ENCODE measurements at regions of chr7 and their contacts with region 1.

Region 1: GRCh38 chr7:44769776-44770662 is 21.4 kb downstream of the ZMIZ2 start:
- DNase-seq: no peak
- ATAC-seq: peak; percentile 10
- H3K4me3 Mint-ChIP-seq: peak overlapping the region; percentile 58
- H3K27ac Mint-ChIP-seq: peak overlapping the region; percentile 88
- H3K4me1 Mint-ChIP-seq: peaks cover 60% of the 10 kb centered on the region
- H3K27me3 Mint-ChIP-seq: no peaks in the 10 kb centered on the region
- CTCF ChIP-seq: no peak

Region 2: DNA sequence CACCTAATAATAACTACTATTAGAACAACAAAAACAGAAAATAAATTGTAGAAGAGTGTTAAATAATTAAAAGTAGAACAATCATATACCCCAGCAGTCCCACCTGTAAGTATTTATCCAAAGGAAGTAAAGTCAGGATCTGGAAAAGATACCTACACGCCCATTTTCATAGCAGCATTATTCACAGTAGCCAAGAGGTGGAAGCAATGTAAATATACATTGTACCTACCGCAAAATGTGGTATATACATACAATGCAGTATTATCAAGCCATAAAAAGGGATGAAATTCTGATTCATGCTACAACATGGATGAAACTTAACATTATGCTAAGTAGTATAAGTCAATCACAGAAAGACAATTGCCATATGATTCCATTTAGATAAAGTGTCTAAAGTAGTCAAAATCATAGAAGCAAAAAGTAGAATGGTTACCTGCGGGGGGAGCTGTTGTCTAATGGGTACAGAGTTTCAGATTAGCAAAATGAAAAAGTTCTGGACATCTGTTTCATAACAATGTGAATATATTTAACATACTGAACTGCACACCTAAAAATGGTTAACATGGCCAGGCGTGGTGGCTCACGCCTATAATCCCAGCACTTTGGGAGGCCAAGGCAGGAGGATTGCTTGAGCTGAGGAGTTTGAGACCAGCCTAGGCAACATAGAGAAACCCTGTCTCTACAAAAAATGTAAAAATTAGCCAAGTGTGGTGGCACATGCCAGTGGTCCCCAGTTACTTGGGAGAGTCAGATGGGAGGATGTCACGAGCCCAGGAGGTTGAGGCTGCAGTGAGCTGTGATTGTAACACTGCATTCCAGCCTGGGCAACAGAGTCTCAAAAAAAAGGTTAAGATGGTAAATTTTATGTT is 181.9 kb before region 1 on chr7:
- CTCF ChIA-PET with region 1: interaction called, 3 read pairs
- POLR2A ChIA-PET with region 1: interaction called, 9 read pairs
- intact Hi-C with region 1: loop called (anchors 1 kb)
- DNase-seq: no peak
- ATAC-seq: peak; percentile 79
- H3K4me3 Mint-ChIP-seq: no peak overlapping the region
- H3K27ac Mint-ChIP-seq: no peak overlapping the region
- H3K4me1 Mint-ChIP-seq: peaks cover 6% of the 10 kb centered on the region
- H3K27me3 Mint-ChIP-seq: peaks cover 3% of the 10 kb centered on the region
- CTCF ChIP-seq: no peak

Region 3: DNA sequence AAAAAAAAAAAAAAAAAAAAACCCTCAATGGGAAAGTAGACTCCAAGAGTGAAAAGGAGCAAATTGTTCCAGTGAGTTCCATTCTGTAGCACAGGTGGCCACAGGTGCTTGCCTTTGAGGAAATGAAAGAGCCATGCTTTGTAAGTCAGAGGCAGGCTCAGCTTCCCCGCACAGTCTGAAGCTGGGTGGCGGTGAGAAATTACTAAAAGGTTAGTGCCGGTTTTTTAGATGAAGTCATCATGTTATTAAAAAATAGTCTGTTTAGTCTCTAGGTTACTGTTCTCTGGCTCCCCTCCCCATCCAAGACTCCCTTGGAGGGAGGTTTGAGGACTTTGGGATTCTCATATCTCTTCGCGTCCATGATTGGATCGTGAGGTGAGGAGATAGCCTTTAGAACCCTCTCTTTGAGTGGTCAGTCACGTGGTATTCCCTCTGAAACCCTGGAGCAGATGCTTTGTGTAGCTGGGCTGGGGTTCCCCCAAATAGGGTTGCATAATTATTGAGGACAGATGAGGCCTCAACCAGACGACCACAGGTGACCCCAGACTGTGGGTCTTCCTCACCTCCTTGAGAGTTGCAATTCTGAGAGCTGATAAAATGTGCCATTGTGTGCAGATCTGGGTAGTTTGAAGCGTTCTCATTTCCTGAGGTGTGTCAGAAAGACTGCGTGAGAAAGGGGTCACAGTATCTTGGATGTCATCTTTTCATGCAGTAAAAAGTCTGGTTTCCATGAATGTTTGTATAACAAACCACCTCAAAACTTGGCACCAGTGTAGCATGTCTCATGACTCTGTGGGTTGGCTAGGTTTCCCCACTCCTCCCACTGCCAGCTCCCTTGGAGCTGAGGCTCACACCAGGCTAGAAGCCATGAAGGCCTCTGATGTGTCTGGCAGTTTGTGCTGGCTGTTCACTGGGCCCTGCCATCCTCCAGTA is 136.5 kb before region 1 on chr7:
- CTCF ChIA-PET with region 1: interaction called, 7 read pairs
- POLR2A ChIA-PET with region 1: interaction called, 20 read pairs
- intact Hi-C with region 1: no loop called
- DNase-seq: peak; percentile 32
- ATAC-seq: peak; percentile 67
- H3K4me3 Mint-ChIP-seq: peak overlapping the region; percentile 61
- H3K27ac Mint-ChIP-seq: peak overlapping the region; percentile 96
- H3K4me1 Mint-ChIP-seq: peaks cover 96% of the 10 kb centered on the region
- H3K27me3 Mint-ChIP-seq: no peaks in the 10 kb centered on the region
- CTCF ChIP-seq: no peak

Region 4: DNA sequence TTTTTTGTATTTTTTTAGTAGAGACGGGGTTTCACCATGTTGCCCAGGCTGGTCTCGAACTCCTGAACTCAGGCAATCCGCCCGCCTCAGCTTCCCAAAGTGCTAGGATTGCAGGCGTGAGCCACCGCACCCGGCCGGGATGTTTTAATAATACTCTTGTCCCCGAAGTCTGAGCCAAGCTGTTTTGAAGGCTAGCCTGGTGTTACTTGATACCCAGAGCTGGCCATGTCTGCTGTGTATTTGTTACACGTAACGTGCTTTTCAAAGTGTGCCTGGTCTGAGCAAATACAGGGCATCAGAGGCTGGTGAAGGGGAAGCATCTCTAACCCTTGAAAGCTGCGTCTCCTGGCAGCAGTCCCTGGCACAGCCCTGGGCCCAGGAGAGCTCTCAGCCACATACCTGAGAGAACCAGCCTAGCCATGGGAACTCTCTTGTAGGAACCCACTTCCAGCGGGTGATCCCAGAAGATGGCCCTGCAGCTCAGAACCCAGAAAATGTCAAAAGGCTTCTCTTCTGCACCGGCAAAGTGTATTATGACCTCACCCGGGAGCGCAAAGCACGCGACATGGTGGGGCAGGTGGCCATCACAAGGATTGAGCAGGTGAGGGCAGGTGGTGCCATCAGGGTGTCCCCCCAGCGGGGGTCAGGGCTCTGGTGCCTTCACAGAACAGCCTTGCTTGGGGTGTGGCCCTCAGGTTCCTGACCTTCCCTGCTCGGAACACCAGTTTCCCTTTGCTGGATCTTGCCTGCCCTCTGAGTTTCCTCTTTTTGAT is 63.0 kb before region 1 on chr7:
- CTCF ChIA-PET with region 1: interaction called, 4 read pairs
- POLR2A ChIA-PET with region 1: interaction called, 4 read pairs
- intact Hi-C with region 1: loop called (anchors 1 kb)
- DNase-seq: no peak
- ATAC-seq: no peak
- H3K4me3 Mint-ChIP-seq: no peak overlapping the region
- H3K27ac Mint-ChIP-seq: no peak overlapping the region
- H3K4me1 Mint-ChIP-seq: no peaks in the 10 kb centered on the region
- H3K27me3 Mint-ChIP-seq: no peaks in the 10 kb centered on the region
- CTCF ChIP-seq: no peak

Region 5: GRCh38 chr7:44735403-44736165 is 34.4 kb before region 1 on chr7:
- CTCF ChIA-PET with region 1: no interaction called
- POLR2A ChIA-PET with region 1: interaction called, 10 read pairs
- intact Hi-C with region 1: no loop called
- DNase-seq: no peak
- ATAC-seq: peak; percentile 77
- H3K4me3 Mint-ChIP-seq: peak overlapping the region; percentile 47
- H3K27ac Mint-ChIP-seq: peak overlapping the region; percentile 71
- H3K4me1 Mint-ChIP-seq: peaks cover 15% of the 10 kb centered on the region
- H3K27me3 Mint-ChIP-seq: no peaks in the 10 kb centered on the region
- CTCF ChIP-seq: no peak

Region 6: GRCh38 chr7:44787041-44787440 is 17.0 kb after region 1 on chr7:
- CTCF ChIA-PET with region 1: interaction called, 3 read pairs
- POLR2A ChIA-PET with region 1: interaction called, 9 read pairs
- intact Hi-C with region 1: loop called (anchors 2 kb)
- DNase-seq: no peak
- ATAC-seq: peak; percentile 86
- H3K4me3 Mint-ChIP-seq: no peak overlapping the region
- H3K27ac Mint-ChIP-seq: peak overlapping the region; percentile 71
- H3K4me1 Mint-ChIP-seq: peaks cover 11% of the 10 kb centered on the region
- H3K27me3 Mint-ChIP-seq: no peaks in the 10 kb centered on the region
- CTCF ChIP-seq: no peak